SK-N-SH (cell line): ENCODE measurements at regions of chr15 and their contacts with region 1.

Region 1: DNA sequence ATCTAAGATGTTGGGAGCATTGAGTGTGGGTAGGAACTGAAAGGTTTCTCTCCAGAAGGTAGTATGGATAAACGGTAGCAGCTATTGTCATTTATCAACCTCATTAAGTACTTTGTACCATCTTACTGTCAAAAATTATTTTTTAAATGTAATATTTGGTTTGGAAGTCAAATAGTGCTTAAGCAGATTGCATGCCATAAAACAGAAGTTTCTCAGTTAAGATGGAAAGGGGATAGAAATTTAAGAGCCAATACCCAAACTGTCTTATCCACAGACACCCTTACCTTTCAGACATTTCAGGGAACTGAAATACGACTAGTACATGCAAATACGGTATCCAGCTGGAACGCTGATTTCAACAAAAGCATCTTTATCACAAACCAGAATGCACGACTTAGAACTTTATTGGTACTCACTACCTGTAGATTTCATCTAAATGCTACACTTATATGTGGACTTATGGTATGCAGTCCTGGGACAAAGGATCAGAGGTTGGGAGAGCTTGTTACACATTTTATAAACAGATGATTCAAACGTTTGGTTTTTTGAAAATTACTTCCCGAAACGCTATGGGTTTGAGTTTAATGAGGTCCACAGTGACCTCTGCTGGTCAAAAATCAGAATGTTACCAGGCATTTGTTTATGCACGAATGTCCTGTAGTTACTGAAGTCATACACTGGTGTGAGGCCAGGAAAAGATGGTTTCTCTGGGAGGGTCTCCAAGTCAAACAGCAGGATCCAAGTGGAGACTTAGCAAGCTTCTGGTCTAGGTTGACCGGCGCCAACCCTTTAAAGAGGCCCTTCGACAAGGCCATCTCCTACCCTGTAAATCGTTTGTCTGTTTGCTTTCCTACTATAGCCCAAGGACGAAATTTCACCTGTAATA is 45.7 kb upstream of the DUT start:
- DNase-seq: peak; percentile 61
- H3K4me3 ChIP-seq: peak overlapping the region; percentile 25 to 44; a peak in 3 of 4 replicates
- H3K27ac ChIP-seq: no peak overlapping the region
- H3K4me1 ChIP-seq: peaks cover 0 to 6% of the 10 kb centered on the region in 2 experiments; a peak in 2 of 4 replicates
- H3K27me3 ChIP-seq: no peaks in the 10 kb centered on the region
- CTCF ChIP-seq: peak; percentile 81
- EP300 ChIP-seq: no peak
- RAD21 ChIP-seq: peak; percentile 75

Region 2: DNA sequence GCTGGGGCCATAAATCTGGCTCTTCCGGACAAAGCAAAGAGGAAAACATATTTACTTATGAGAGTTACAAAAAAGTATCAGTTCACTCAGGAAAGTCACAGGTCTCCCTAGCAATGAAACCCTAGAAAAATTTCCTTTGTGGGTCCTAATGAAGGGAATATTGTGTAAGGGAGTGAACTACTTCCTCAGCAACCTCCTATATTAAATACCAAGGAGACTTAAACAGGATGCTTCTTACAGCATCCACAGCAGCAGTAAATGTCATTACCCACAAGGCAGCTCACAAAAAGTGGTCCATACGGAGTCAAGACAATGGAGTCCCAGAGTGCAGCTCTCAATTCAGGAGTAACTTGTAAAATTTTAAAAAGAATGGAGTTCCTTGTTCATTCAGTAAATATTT is 179.6 kb before region 1 on chr15:
- CTCF ChIA-PET with region 1: interaction called, 31 read pairs
- POLR2A ChIA-PET with region 1: no interaction called
- DNase-seq: no peak
- H3K4me3 ChIP-seq: no peak overlapping the region
- H3K27ac ChIP-seq: no peak overlapping the region
- H3K4me1 ChIP-seq: peaks cover 0 to under 1% of the 10 kb centered on the region in 2 experiments; a peak in 2 of 4 replicates
- H3K27me3 ChIP-seq: no peaks in the 10 kb centered on the region
- CTCF ChIP-seq: no peak
- EP300 ChIP-seq: no peak
- RAD21 ChIP-seq: no peak

Region 3: DNA sequence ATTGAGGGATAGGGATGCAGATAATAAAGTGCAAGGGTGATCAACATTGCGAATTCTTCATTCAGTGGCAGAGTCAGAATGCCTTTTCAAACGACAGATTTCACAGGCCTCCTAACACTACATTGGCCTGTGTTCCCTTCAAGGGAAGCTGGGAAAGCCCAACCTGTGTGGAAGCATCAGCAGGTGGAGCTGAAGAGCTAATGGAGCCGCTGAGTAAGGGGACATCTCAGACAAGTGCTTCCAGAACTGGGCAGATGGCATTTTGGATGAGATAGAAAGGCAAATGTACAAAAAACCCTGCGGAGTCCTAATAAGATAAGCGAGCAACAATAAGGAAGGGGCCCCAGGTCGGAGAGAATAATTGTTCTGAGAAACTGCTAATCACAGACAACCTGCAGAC is 173.3 kb before region 1 on chr15:
- CTCF ChIA-PET with region 1: interaction called, 31 read pairs
- POLR2A ChIA-PET with region 1: no interaction called
- DNase-seq: peak; percentile 36
- H3K4me3 ChIP-seq: no peak overlapping the region
- H3K27ac ChIP-seq: no peak overlapping the region
- H3K4me1 ChIP-seq: no peaks in the 10 kb centered on the region; a peak in 1 of 4 replicates
- H3K27me3 ChIP-seq: no peaks in the 10 kb centered on the region
- CTCF ChIP-seq: peak; percentile 64
- EP300 ChIP-seq: no peak
- RAD21 ChIP-seq: peak; percentile 81

Region 4: DNA sequence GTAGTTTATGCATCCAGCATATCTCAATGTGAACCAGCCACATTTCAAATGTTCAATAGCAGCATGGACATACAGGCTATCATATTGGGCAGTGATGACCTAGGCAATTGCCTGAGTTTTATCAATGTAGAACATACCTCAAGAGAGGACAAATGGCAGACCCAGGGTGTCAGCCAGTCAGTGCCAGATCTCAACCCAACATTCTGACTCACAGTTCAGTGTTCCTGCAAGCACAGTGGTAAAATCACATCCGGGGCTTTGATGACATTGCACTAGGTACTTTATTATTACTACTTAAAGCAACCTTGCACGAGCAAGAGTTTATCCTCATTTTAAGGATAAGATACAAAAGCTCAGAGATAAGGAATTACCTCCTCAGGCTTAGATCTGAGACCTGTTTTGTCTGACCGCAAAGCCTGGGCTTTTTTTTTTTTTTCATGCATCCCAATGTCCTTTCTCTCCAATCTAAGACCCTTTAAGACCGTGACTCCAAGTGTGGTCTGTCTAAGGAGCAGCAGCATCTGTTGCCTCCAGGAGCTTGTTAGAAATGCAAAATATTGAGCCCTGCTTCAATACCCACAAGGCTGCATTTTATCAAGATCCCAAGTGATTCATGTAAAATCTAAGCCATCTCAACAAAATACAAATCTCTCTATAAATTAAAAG is 19.4 kb before region 1 on chr15:
- CTCF ChIA-PET with region 1: interaction called, 13 read pairs
- POLR2A ChIA-PET with region 1: no interaction called
- DNase-seq: no peak
- H3K4me3 ChIP-seq: no peak overlapping the region
- H3K27ac ChIP-seq: no peak overlapping the region
- H3K4me1 ChIP-seq: no peaks in the 10 kb centered on the region
- H3K27me3 ChIP-seq: no peaks in the 10 kb centered on the region
- CTCF ChIP-seq: no peak
- EP300 ChIP-seq: no peak
- RAD21 ChIP-seq: no peak

Region 5: DNA sequence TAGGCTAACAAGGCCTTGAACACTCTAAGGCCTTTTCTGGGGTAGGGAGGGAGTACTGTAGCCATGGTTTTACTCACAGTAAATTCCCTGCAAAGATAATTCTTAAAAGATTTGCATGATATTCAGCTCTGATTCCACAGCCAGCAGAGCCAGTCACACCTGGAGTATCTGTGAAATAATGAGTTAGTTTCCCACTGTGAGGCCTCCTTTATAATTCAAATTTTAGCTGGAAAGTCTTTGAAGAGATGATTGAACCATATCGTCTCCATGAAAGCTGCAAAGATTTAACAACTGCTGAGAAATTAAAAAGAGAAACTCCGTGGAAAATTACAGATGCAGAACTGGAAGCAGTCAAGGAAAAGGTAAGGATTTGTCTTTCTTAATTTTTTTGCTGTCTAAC is 13.3 kb after region 1 on chr15:
- CTCF ChIA-PET with region 1: interaction called, 24 read pairs
- POLR2A ChIA-PET with region 1: no interaction called
- DNase-seq: no peak
- H3K4me3 ChIP-seq: no peak overlapping the region
- H3K27ac ChIP-seq: no peak overlapping the region
- H3K4me1 ChIP-seq: no peaks in the 10 kb centered on the region
- H3K27me3 ChIP-seq: no peaks in the 10 kb centered on the region
- CTCF ChIP-seq: no peak
- EP300 ChIP-seq: no peak
- RAD21 ChIP-seq: no peak

Region 6: GRCh38 chr15:48307586-48307985 is 22.0 kb after region 1 on chr15:
- CTCF ChIA-PET with region 1: interaction called, 21 read pairs
- POLR2A ChIA-PET with region 1: no interaction called
- DNase-seq: no peak
- H3K4me3 ChIP-seq: no peak overlapping the region
- H3K27ac ChIP-seq: no peak overlapping the region
- H3K4me1 ChIP-seq: no peaks in the 10 kb centered on the region
- H3K27me3 ChIP-seq: no peaks in the 10 kb centered on the region
- CTCF ChIP-seq: no peak
- EP300 ChIP-seq: no peak
- RAD21 ChIP-seq: no peak

Region 7: DNA sequence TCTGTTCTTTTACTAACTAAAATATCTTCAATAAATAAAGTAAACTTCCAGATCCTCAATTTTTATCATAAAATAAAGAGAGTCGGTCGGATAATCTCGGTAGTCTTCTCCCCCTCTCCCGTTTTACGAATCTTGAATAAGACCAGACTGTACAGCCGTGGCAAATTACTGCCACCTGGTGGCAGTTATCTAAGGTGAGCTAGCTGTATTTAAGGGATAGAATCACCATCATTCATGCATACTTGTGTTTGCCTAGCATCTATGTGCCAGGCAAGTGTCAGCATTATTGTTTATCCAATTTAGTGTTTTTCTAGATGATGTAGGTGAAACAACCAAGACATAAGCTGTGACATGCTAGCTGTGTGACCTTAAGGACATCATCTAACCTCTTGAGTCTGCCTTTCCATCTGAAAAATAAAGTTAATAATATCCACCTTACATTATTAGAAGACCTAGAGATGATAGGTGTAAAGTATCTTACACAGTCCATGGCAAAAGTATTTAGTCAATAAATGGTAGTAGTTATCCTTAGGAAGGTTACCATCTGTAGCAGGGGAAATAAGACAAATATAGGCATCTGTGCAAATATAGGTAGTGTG is 67.0 kb after region 1 on chr15:
- CTCF ChIA-PET with region 1: interaction called, 10 read pairs
- POLR2A ChIA-PET with region 1: no interaction called
- DNase-seq: peak; percentile 63
- H3K4me3 ChIP-seq: no peak overlapping the region
- H3K27ac ChIP-seq: no peak overlapping the region
- H3K4me1 ChIP-seq: no peaks in the 10 kb centered on the region
- H3K27me3 ChIP-seq: no peaks in the 10 kb centered on the region
- CTCF ChIP-seq: peak; percentile 85
- EP300 ChIP-seq: no peak
- RAD21 ChIP-seq: peak; percentile 80